SK-N-SH (cell line): ENCODE measurements at regions of chr17 and their contacts with region 1.

Region 1: GRCh38 chr17:42112552-42113176 is at the start of gene DHX58:
- DNase-seq: no peak
- H3K4me3 ChIP-seq: no peak within 1 kb of the TSS
- H3K27ac ChIP-seq: no peak within 1 kb of the TSS
- H3K4me1 ChIP-seq: peaks cover 0 to 11% of the 10 kb centered on the region in 2 experiments; a peak in 1 of 4 replicates
- H3K27me3 ChIP-seq: no peaks in the 10 kb centered on the region
- CTCF ChIP-seq: no peak
- EP300 ChIP-seq: no peak
- RAD21 ChIP-seq: no peak
- polyA plus RNA-seq, gene DHX58: 1.2 and 1.6 TPM in 2 replicates

Region 2: DNA sequence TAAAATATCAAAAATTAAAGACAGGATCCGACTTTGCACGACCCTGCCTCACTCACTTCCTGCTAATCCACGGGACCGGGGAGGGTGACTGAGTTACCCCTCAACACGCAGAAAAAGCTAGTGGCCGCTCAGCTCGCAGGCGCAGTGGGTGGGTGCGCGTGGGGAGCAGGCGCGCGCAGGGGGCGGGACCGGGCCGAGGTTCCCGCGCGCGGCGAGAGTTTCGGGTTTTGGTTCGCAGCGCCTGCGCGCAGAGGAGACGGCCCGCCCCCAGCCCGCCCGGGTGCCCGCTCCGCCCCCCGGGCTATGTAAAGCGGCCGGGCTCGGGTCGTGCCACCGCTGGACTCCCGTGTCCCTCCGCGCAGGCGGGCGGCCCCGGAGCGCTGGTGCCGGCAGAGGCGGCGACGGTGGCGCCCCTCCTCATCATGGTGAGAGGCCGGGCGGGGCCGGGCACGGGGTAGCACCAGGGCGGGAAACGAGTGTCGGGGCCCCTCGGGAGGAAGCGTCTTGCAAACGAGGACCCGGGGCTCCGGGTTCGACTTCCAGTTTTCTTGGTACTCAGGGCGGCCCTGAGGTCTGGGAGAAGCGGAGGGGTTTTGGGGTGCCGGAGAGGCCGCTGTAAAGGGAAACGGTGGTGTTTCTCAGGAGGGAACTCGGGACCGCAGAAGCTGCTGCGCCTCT is 146.1 kb before region 1 on chr17 and contains the start of gene CNP:
- CTCF ChIA-PET with region 1: interaction called, 32 read pairs
- POLR2A ChIA-PET with region 1: no interaction called
- DNase-seq: peak; percentile 99
- H3K4me3 ChIP-seq: peak within 1 kb of the TSS; percentile 93 to 96
- H3K27ac ChIP-seq: peak within 1 kb of the TSS; percentile 65 to 91
- H3K4me1 ChIP-seq: peaks cover 5 to 34% of the 10 kb centered on the region in 2 experiments; a peak in 2 of 4 replicates
- H3K27me3 ChIP-seq: no peaks in the 10 kb centered on the region
- CTCF ChIP-seq: no peak
- EP300 ChIP-seq: no peak
- RAD21 ChIP-seq: no peak
- polyA plus RNA-seq, gene CNP: 44.8 and 54.8 TPM in 2 replicates

Region 3: GRCh38 chr17:42047343-42047742 is 65.3 kb before region 1 on chr17:
- CTCF ChIA-PET with region 1: no interaction called
- POLR2A ChIA-PET with region 1: no interaction called
- DNase-seq: no peak
- H3K4me3 ChIP-seq: no peak overlapping the region
- H3K27ac ChIP-seq: no peak overlapping the region
- H3K4me1 ChIP-seq: peaks cover 0 to 8% of the 10 kb centered on the region in 2 experiments; a peak in 1 of 4 replicates
- H3K27me3 ChIP-seq: no peaks in the 10 kb centered on the region
- CTCF ChIP-seq: no peak
- EP300 ChIP-seq: no peak
- RAD21 ChIP-seq: no peak

Region 4: GRCh38 chr17:42072323-42073187 is 40.1 kb before region 1 on chr17:
- CTCF ChIA-PET with region 1: interaction called, 187 read pairs
- POLR2A ChIA-PET with region 1: no interaction called
- DNase-seq: peak; percentile 83
- H3K4me3 ChIP-seq: peak overlapping the region in 1 of 2 experiments; percentile 42; a peak in 2 of 4 replicates
- H3K27ac ChIP-seq: no peak overlapping the region
- H3K4me1 ChIP-seq: peaks cover 0 to 9% of the 10 kb centered on the region in 2 experiments; a peak in 1 of 4 replicates
- H3K27me3 ChIP-seq: no peaks in the 10 kb centered on the region
- CTCF ChIP-seq: no peak
- EP300 ChIP-seq: no peak
- RAD21 ChIP-seq: no peak